CD4-positive, alpha-beta T cell (primary cell): ENCODE measurements at regions of chr9 and their contacts with region 1.

Region 1: GRCh38 chr9:136439550-136440408 is at the start of gene INPP5E:
- DNase-seq: peak; percentile 65 to 91 (median 82)
- ATAC-seq: peak; percentile 78
- H3K4me3 ChIP-seq: peak within 1 kb of the TSS; percentile 71
- H3K4me3 Mint-ChIP-seq: peak within 1 kb of the TSS; percentile 97
- H3K27ac ChIP-seq: peak within 1 kb of the TSS in 1 of 2 donors; percentile 29
- H3K27ac Mint-ChIP-seq: peak within 1 kb of the TSS; percentile 92
- H3K4me1 ChIP-seq: peaks cover 35% of the 10 kb centered on the region
- H3K4me1 Mint-ChIP-seq: peaks cover 21% of the 10 kb centered on the region
- H3K27me3 ChIP-seq: no peaks in the 10 kb centered on the region
- H3K27me3 Mint-ChIP-seq: no peaks in the 10 kb centered on the region
- CTCF ChIP-seq: peak; percentile 50
- total RNA-seq, gene INPP5E: 17.2 to 19.4 TPM

Region 2: GRCh38 chr9:136327313-136327974 is 112.3 kb before region 1 on chr9 and contains the start of gene GPSM1:
- CTCF ChIA-PET with region 1: no interaction called
- POLR2A ChIA-PET with region 1: no interaction called
- intact Hi-C with region 1: no loop called
- DNase-seq: peak in 12 of 14 experiments; percentile 7 to 73 (median 39)
- ATAC-seq: peak; percentile 72
- H3K4me3 ChIP-seq: peak within 1 kb of the TSS; percentile 44
- H3K4me3 Mint-ChIP-seq: peak within 1 kb of the TSS; percentile 79
- H3K27ac ChIP-seq: no peak within 1 kb of the TSS
- H3K27ac Mint-ChIP-seq: no peak within 1 kb of the TSS
- H3K4me1 ChIP-seq: peaks cover 26% of the 10 kb centered on the region
- H3K4me1 Mint-ChIP-seq: peaks cover 5% of the 10 kb centered on the region
- H3K27me3 ChIP-seq: peaks cover 0 to 2% of the 10 kb centered on the region in 2 experiments
- H3K27me3 Mint-ChIP-seq: no peaks in the 10 kb centered on the region
- CTCF ChIP-seq: no peak
- total RNA-seq, gene GPSM1: 7.7 to 8.6 TPM

Region 3: DNA sequence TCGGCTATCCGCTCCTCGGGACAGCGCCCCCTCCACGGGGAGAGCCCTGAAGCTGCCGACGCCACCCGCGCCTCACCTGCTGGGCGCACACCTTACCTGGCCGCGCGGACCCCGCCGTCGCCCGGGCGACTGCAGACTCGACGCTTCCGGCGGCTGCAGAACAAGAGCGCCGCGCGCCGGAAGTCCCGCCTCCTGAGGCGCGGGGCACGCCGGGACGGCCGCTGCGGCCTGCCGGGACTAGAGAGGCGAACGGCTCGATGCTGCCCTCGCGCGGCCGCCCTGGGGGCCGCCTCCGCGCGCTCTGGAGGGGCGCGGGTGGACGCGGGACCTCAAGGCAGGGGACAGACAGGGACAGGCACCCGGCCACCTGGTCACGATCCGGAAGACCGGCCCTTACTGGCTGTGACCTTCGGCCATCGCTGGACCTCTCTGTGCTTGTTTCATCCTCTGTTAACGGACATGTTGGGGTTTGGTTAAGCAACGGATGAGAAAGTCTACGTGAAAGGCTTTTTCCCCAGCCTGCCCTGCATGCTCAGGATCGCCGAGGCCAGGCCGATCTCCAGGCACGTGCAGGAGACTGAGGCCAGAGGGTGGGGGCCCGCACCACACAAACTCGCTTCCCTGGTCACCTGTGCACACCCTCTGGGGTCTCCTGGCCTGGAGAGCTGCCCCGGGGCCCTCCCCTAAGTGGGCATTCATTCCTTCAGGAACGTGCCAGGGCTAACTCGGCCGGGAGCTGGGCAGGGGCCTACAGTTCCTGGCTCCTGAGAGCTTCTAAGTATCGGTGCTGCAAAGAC is 39.5 kb before region 1 on chr9 and contains the start of gene SNAPC4:
- CTCF ChIA-PET with region 1: no interaction called
- POLR2A ChIA-PET with region 1: interaction called, 6 read pairs
- intact Hi-C with region 1: loop called in 1 of 2 experiments (anchors 2 kb)
- DNase-seq: peak; percentile 75 to 95 (median 86)
- ATAC-seq: peak; percentile 66
- H3K4me3 ChIP-seq: peak within 1 kb of the TSS; percentile 72
- H3K4me3 Mint-ChIP-seq: peak within 1 kb of the TSS; percentile 88
- H3K27ac ChIP-seq: no peak within 1 kb of the TSS
- H3K27ac Mint-ChIP-seq: peak within 1 kb of the TSS; percentile 55
- H3K4me1 ChIP-seq: peaks cover 59% of the 10 kb centered on the region
- H3K4me1 Mint-ChIP-seq: peaks cover 41% of the 10 kb centered on the region
- H3K27me3 ChIP-seq: no peaks in the 10 kb centered on the region
- H3K27me3 Mint-ChIP-seq: no peaks in the 10 kb centered on the region
- CTCF ChIP-seq: peak; percentile 87
- total RNA-seq, gene SNAPC4: 7.7 to 8.0 TPM

Region 4: GRCh38 chr9:136424750-136425362 is 14.9 kb before region 1 on chr9:
- CTCF ChIA-PET with region 1: no interaction called
- POLR2A ChIA-PET with region 1: no interaction called
- intact Hi-C with region 1: no loop called
- DNase-seq: no peak
- ATAC-seq: no peak
- H3K4me3 ChIP-seq: no peak overlapping the region
- H3K4me3 Mint-ChIP-seq: no peak overlapping the region
- H3K27ac ChIP-seq: no peak overlapping the region
- H3K27ac Mint-ChIP-seq: no peak overlapping the region
- H3K4me1 ChIP-seq: no peaks in the 10 kb centered on the region
- H3K4me1 Mint-ChIP-seq: no peaks in the 10 kb centered on the region
- H3K27me3 ChIP-seq: no peaks in the 10 kb centered on the region
- H3K27me3 Mint-ChIP-seq: no peaks in the 10 kb centered on the region
- CTCF ChIP-seq: no peak

Region 5: DNA sequence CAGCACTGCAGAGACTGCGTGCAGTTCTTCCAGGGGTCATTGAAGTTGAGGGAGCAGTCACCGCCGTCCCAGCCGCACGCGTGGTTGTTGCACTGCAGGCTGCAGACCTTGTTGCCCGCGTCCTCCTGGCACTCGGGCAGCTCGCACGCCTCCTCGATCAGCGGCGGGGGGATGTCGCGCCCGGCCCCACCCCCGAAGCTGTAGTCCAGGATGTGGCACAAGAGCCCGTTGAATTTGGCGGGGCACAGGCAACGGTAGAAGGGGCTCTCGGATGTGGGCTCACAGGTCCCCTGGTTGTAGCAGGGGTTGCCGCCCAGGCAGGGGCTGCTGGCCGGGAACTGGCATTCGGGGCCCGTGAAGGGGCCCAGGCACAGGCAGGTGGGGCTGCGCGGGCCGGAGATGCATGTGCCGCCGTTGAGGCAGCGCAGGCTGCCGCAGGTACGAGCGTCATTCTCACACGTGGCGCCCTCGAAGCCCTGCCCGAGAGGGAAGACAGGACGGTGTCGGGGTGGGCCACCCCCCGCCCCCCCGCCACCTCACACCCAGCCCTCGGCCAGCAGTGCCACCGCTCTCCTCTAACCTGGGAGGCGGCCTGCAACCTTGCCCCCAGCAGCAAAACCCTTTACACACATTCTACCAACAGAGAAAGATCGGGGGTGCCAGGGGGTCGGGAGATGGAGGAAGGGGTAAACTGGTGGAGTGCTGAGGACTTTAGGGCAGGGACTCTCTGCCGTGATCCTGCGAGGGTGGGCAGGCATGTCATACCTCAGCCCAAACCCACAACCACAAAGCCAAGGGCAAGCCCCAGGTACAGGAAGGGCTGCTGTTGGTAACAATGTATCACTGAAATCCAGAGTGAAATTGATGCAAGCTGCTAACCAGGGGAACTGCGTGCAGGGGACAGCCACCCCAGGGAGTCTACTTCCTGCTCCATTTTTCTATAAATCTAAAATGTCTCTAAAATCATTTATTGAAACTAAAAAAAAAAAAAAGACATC is 65.9 kb after region 1 on chr9:
- CTCF ChIA-PET with region 1: no interaction called
- POLR2A ChIA-PET with region 1: no interaction called
- intact Hi-C with region 1: loop called in 1 of 2 experiments (anchors 2 kb)
- DNase-seq: no peak
- ATAC-seq: no peak
- H3K4me3 ChIP-seq: no peak overlapping the region
- H3K4me3 Mint-ChIP-seq: no peak overlapping the region
- H3K27ac ChIP-seq: no peak overlapping the region
- H3K27ac Mint-ChIP-seq: no peak overlapping the region
- H3K4me1 ChIP-seq: no peaks in the 10 kb centered on the region
- H3K4me1 Mint-ChIP-seq: no peaks in the 10 kb centered on the region
- H3K27me3 ChIP-seq: no peaks in the 10 kb centered on the region
- H3K27me3 Mint-ChIP-seq: no peaks in the 10 kb centered on the region
- CTCF ChIP-seq: no peak